Activated CD8-positive, alpha-beta T cell treated with anti-CD3 and anti-CD28 coated beads for 36 hours (primary cell): ENCODE measurements at regions of chr1 and their contacts with region 1.

Region 1: GRCh38 chr1:111214074-111214801 is 13.3 kb upstream of the CHI3L2 start:
- DNase-seq: no peak
- ATAC-seq: peak; percentile 0
- H3K4me3 Mint-ChIP-seq: peak overlapping the region; percentile 77
- H3K27ac Mint-ChIP-seq: peak overlapping the region; percentile 93
- H3K4me1 Mint-ChIP-seq: peaks cover 80% of the 10 kb centered on the region
- H3K27me3 Mint-ChIP-seq: no peaks in the 10 kb centered on the region
- CTCF ChIP-seq: no peak

Region 2: DNA sequence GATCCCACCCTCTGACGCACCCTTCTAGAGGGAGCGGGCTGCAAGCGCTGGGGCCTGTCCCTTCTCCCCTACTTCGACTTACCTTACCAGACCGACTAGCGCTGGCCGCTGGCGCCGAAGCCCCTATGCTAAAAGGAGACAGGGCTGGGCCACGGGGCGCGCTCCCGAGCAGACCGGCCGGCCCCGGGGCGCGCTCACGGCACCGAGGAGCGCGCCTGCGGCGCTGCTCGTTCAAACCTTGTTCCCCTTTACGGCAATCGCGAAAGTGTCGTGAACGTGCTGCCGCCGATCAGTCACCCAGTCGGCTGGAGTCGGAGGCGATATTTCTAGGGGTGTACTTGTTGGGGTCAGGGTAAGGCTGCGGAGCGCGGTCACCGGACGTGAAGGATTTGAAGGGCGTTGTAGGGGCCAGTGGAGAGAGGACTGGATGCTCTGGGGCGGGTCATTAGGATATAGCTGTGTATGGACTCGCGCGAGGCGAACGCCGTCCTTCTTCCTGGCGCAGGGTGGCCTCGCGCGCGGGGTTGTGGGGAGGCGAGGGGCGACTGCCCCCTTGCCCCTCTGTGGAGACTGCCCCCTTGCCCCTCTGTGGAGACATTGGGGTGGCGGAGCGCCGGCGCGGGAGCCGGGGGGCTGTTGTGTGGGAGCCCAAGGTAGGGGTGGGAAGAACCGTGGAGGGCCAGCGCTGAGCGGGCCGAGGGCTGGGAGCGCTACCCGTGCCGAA is 74.1 kb before region 1 on chr1 and contains the starts of genes CEPT1 and DRAM2:
- CTCF ChIA-PET with region 1: interaction called, 8 read pairs
- POLR2A ChIA-PET with region 1: interaction called, 18 read pairs
- intact Hi-C with region 1: no loop called
- DNase-seq: peak; percentile 99
- ATAC-seq: peak; percentile 82
- H3K4me3 Mint-ChIP-seq: peak within 1 kb of the TSS; percentile 99
- H3K27ac Mint-ChIP-seq: peak within 1 kb of the TSS; percentile 100
- H3K4me1 Mint-ChIP-seq: peaks cover 50% of the 10 kb centered on the region
- H3K27me3 Mint-ChIP-seq: no peaks in the 10 kb centered on the region
- CTCF ChIP-seq: no peak
- total RNA-seq, gene CEPT1: 36.0 to 38.6 TPM
- total RNA-seq, gene DRAM2: 27.5 to 37.2 TPM

Region 3: GRCh38 chr1:111190651-111191451 is 23.4 kb before region 1 on chr1:
- CTCF ChIA-PET with region 1: interaction called, 150 read pairs
- POLR2A ChIA-PET with region 1: interaction called, 245 read pairs
- intact Hi-C with region 1: no loop called
- DNase-seq: no peak
- ATAC-seq: no peak
- H3K4me3 Mint-ChIP-seq: no peak overlapping the region
- H3K27ac Mint-ChIP-seq: peak overlapping the region; percentile 98
- H3K4me1 Mint-ChIP-seq: peaks cover 93% of the 10 kb centered on the region
- H3K27me3 Mint-ChIP-seq: no peaks in the 10 kb centered on the region
- CTCF ChIP-seq: no peak

Region 4: DNA sequence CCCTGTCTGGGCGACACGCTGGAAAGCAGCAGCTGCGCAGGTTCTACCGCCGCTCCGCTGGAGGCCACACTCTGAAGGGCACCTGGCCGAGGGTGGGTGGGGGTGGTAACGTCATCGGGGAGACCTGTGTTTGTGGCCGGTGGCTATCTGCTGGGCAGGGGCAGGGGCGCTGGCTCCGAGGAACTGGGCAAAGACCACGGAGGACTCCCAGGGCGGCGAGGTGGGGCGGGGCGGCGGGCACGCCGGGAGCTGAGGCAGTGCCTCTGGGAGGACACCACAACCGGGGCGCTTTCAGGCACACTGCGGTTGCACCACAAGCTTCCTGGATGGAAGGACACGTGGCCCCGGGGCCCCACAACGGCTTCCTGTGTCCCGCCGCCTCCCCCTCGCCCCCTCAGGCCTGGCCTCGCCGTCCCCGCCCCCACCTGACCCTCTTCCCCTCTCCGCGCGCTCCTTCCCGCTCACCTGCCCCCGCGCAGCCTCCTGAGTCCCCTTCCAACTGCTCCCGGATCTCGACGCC is 10.5 kb before region 1 on chr1:
- CTCF ChIA-PET with region 1: interaction called, 150 read pairs
- POLR2A ChIA-PET with region 1: interaction called, 245 read pairs
- intact Hi-C with region 1: loop called (anchors 1 kb)
- DNase-seq: peak; percentile 93
- ATAC-seq: peak; percentile 31
- H3K4me3 Mint-ChIP-seq: peak overlapping the region; percentile 99
- H3K27ac Mint-ChIP-seq: peak overlapping the region; percentile 98
- H3K4me1 Mint-ChIP-seq: peaks cover 56% of the 10 kb centered on the region
- H3K27me3 Mint-ChIP-seq: no peaks in the 10 kb centered on the region
- CTCF ChIP-seq: no peak